ENCODE measurements at regions of chr10 and their contacts with region 1.

Region 1: GRCh38 chr10:28393966-28394568 is 91.2 kb upstream of the MPP7 start:
- DNase-seq: peak; percentile 24
- H3K4me3 Mint-ChIP-seq: no peak overlapping the region
- H3K27ac Mint-ChIP-seq: no peak overlapping the region
- H3K4me1 Mint-ChIP-seq: peaks cover 7% of the 10 kb centered on the region
- H3K27me3 Mint-ChIP-seq: peaks cover 19% of the 10 kb centered on the region

Region 2: DNA sequence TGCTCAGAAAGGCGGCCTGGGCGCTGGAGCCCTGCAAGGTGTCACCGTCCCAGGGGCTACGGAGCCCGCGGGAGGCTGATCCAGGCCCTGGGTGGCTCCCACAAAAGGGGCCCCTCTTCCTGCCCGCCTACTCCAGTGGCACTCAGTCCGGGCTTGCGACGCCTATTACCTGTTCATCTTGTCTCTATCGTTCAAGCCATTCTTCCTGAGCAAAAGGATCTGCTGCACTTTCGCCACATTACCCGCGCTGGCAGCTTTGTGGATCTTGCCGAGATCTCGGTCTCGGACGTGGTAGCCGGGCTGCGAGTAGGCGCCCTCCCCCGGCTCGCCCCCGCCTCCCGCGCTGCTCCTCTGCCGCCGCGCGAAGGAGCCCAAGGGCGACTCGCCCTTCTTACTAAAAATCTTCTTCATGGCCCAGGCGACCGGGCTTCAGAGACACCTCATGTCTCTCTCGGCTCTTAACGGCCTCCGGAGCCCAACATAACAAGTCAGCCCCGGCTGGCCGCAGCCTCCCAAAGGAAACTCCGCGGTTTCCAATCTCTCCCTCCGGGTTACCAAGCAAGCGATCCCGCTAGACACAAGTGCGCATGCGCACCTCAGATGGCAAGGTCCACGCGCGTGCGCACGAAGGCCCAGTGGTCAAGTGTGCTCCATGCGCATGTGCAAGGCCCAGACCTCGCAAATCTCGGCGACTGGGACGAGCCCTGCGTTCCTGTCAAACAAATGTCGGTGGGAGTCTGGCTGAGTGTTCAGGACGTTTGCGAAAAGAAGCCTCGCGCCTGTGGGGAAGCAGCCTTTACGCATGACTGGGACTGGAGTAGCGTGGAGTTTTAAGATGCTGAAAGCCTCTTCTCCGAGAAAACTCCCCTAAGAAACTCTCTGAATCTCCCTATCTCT is 1293.9 kb before region 1 on chr10 and contains the start of gene ANKRD26:
- intact Hi-C with region 1: no loop called
- DNase-seq: peak; percentile 96
- H3K4me3 Mint-ChIP-seq: peak within 1 kb of the TSS; percentile 86
- H3K27ac Mint-ChIP-seq: peak within 1 kb of the TSS; percentile 98
- H3K4me1 Mint-ChIP-seq: peaks cover 43% of the 10 kb centered on the region
- H3K27me3 Mint-ChIP-seq: no peaks in the 10 kb centered on the region
- total RNA-seq, gene ANKRD26: 4.3 and 7.0 TPM in 2 replicates

Region 3: GRCh38 chr10:28250782-28251181 is 143.3 kb before region 1 on chr10:
- intact Hi-C with region 1: loop called (anchors 1 kb)
- DNase-seq: no peak
- H3K4me3 Mint-ChIP-seq: no peak overlapping the region
- H3K27ac Mint-ChIP-seq: no peak overlapping the region
- H3K4me1 Mint-ChIP-seq: peaks cover 13% of the 10 kb centered on the region
- H3K27me3 Mint-ChIP-seq: no peaks in the 10 kb centered on the region